Esophagus muscularis mucosa (tissue), 4 donors: ENCODE measurements at regions of chr15 and their contacts with region 1.

Region 1: GRCh38 chr15:101014921-101015841 is 96.0 kb downstream of the LRRK1 start:
- DNase-seq: peak; percentile 90
- H3K4me3 ChIP-seq: no peak overlapping the region
- H3K27ac ChIP-seq: no peak overlapping the region
- H3K4me1 ChIP-seq: peaks cover 0 to 8% (median 4%) of the 10 kb centered on the region in 4 donors
- H3K27me3 ChIP-seq: peaks cover 0 to 12% (median 0%) of the 10 kb centered on the region in 4 donors
- CTCF ChIP-seq: peak; percentile 79 to 90 (median 83)
- EP300 ChIP-seq: no peak
- POLR2A ChIP-seq: no peak

Region 2: GRCh38 chr15:101088788-101089583 is 73.8 kb after region 1 on chr15:
- intact Hi-C with region 1: loop called (anchors 5 kb)
- DNase-seq: no peak
- H3K4me3 ChIP-seq: peak overlapping the region; percentile 20 to 44 (median 38)
- H3K27ac ChIP-seq: no peak overlapping the region
- H3K4me1 ChIP-seq: peaks cover 22 to 41% (median 32%) of the 10 kb centered on the region in 4 donors
- H3K27me3 ChIP-seq: no peaks in the 10 kb centered on the region
- CTCF ChIP-seq: peak in 2 of 3 experiments; percentile 99 to 100
- EP300 ChIP-seq: no peak
- POLR2A ChIP-seq: no peak

Region 3: GRCh38 chr15:101348643-101349548 is 333.7 kb after region 1 on chr15:
- intact Hi-C with region 1: no loop called
- DNase-seq: no peak
- H3K4me3 ChIP-seq: no peak overlapping the region
- H3K27ac ChIP-seq: no peak overlapping the region
- H3K4me1 ChIP-seq: no peaks in the 10 kb centered on the region
- H3K27me3 ChIP-seq: peaks cover 0 to 7% (median 0%) of the 10 kb centered on the region in 4 donors
- CTCF ChIP-seq: no peak
- EP300 ChIP-seq: no peak
- POLR2A ChIP-seq: no peak